ENCODE measurements at regions of chr19 and their contacts with region 1.

Region 1: DNA sequence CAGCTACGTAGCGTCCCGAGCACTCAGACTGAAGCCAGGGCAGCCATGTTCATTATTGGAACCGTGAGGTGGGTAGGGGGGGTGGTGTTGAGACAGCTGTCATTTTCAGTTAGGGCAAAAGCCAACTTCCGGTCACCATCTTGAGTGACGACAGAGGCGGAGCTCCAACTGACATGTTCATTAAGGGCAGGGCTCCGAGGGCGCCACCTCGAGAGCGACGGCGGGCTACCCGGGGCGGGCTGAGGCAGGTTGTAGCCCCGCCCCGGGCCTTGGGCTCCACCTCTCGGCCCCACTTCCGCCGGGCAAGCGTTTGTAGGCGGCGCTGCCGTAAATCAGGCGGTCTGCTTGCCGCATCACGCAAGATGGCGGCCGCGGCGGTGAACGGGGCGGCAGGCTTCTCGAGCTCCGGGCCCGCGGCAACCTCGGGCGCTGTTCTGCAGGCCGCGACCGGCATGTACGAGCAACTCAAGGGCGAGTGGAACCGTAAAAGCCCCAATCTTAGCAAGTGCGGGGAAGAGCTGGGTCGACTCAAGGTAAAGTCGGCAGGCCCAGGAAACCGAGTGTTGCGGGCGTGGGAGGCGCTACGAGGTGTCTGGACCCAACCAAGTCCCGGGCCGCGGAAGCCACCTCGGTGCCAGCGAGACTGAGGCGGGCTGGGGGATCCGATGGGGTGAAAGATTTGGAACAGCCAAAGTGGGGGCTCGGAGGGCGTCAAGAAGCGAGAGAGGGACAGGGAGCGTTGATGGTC is at the start of gene PSMD8:
- DNase-seq: peak; percentile 100
- ATAC-seq: peak; percentile 97
- H3K4me3 ChIP-seq: peak within 1 kb of the TSS; percentile 69 to 92 (median 80)
- H3K4me3 Mint-ChIP-seq: peak within 1 kb of the TSS; percentile 93
- H3K27ac ChIP-seq: peak within 1 kb of the TSS; percentile 88 to 90
- H3K27ac Mint-ChIP-seq: peak within 1 kb of the TSS; percentile 96
- H3K4me1 ChIP-seq: peaks cover 17 to 26% of the 10 kb centered on the region in 2 donors
- H3K4me1 Mint-ChIP-seq: peaks cover 26% of the 10 kb centered on the region
- H3K27me3 ChIP-seq: peaks cover 0 to 12% (median 0%) of the 10 kb centered on the region in 4 experiments
- H3K27me3 Mint-ChIP-seq: peaks cover 6% of the 10 kb centered on the region
- CTCF ChIP-seq: peak; percentile 18
- total RNA-seq, gene PSMD8: 77.1 and 88.1 TPM in 2 replicates

Region 2: DNA sequence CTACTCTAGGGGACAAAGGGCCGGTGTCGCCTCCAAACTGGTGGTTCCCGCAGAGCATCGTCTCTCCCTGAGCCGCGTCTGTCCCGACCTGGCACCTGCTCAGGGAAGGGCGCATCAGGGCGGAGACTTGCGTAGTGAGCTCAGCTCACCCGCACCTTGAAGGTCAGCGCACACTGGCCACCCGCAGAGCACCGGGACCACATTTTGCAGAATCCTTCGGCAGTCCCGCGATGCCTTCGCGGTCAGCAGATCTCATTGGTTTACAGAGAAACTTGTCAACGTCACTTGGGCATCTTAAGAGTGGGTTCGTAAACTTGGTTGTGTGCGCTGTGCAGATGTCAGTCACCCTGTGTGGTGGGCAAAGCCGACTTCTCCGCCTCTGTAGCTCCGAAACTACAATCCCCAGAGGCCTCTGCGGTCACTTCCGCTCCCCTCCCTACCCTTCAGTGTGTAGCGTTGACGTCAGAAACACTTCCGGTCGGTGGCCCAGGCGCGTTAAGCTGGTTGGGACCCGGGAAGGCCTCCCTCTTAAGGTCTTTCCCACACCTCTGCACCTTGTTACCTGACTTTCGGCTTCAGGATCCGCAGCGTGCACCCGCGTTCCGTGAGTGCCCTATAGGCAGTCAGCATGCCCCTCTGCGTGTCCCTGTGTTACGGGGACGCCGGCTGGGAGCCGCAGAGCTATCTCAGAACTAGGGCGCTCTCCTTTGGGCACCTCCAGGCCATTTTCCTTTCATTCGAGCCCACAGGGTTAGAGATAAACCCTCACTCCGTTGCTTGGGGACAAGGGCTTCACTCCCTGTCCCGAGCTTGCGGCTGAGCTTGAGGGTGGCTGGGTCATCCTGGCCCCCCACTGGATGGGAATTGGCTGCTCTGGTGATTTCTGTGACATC is 1040.2 kb before region 1 on chr19:
- CTCF ChIA-PET with region 1: no interaction called
- POLR2A ChIA-PET with region 1: no interaction called
- intact Hi-C with region 1: loop called (anchors 2 kb)
- DNase-seq: peak; percentile 92
- ATAC-seq: peak; percentile 95
- H3K4me3 ChIP-seq: peak overlapping the region; percentile 59 to 86 (median 83)
- H3K4me3 Mint-ChIP-seq: peak overlapping the region; percentile 92
- H3K27ac ChIP-seq: peak overlapping the region; percentile 62 to 85
- H3K27ac Mint-ChIP-seq: peak overlapping the region; percentile 83
- H3K4me1 ChIP-seq: peaks cover 11 to 16% of the 10 kb centered on the region in 2 donors
- H3K4me1 Mint-ChIP-seq: peaks cover 21% of the 10 kb centered on the region
- H3K27me3 ChIP-seq: no peaks in the 10 kb centered on the region
- H3K27me3 Mint-ChIP-seq: no peaks in the 10 kb centered on the region
- CTCF ChIP-seq: no peak

Region 3: DNA sequence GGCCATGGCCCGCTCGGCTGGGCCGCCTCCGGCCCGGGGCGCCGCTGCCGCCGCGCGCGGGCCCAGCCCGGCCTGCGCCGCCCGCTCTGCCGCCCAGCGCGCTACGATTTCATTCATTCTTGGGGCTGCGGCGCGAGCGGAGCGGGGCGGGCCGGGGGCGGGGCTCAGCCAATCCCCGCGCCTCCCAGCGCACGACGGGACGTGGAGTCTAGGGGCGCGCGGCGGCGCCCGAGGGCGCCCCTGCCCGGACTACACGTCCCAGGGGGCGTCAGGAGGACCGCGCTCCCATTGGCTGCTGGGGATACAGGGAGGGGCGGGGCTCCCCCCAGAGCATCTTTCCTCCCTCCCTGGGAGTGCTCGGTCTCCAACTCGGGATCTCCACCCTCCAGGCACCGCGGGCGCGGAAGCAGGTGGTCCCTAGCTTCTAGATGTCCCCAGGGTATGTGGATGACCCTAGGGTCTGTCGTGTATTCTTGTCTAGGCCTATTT is 145.0 kb before region 1 on chr19:
- CTCF ChIA-PET with region 1: interaction called, 11 read pairs
- POLR2A ChIA-PET with region 1: interaction called, 6 read pairs
- intact Hi-C with region 1: no loop called
- DNase-seq: peak; percentile 79
- ATAC-seq: peak; percentile 90
- H3K4me3 ChIP-seq: no peak overlapping the region
- H3K4me3 Mint-ChIP-seq: peak overlapping the region; percentile 64
- H3K27ac ChIP-seq: no peak overlapping the region
- H3K27ac Mint-ChIP-seq: peak overlapping the region; percentile 56
- H3K4me1 ChIP-seq: peaks cover 23% of the 10 kb centered on the region in 2 donors
- H3K4me1 Mint-ChIP-seq: peaks cover 22% of the 10 kb centered on the region
- H3K27me3 ChIP-seq: peaks cover 0 to 83% (median 33%) of the 10 kb centered on the region in 4 experiments
- H3K27me3 Mint-ChIP-seq: peaks cover 37% of the 10 kb centered on the region
- CTCF ChIP-seq: no peak

Region 4: GRCh38 chr19:38263689-38264485 is 110.7 kb before region 1 on chr19:
- CTCF ChIA-PET with region 1: interaction called, 5 read pairs
- POLR2A ChIA-PET with region 1: interaction called, 5 read pairs
- intact Hi-C with region 1: loop called (anchors 1 kb)
- DNase-seq: peak; percentile 95
- ATAC-seq: peak; percentile 91
- H3K4me3 ChIP-seq: peak overlapping the region in 4 of 5 experiments; percentile 67 to 87 (median 71)
- H3K4me3 Mint-ChIP-seq: peak overlapping the region; percentile 98
- H3K27ac ChIP-seq: peak overlapping the region; percentile 83 to 98
- H3K27ac Mint-ChIP-seq: peak overlapping the region; percentile 99
- H3K4me1 ChIP-seq: peaks cover 20 to 26% of the 10 kb centered on the region in 2 donors
- H3K4me1 Mint-ChIP-seq: peaks cover 39% of the 10 kb centered on the region
- H3K27me3 ChIP-seq: no peaks in the 10 kb centered on the region
- H3K27me3 Mint-ChIP-seq: no peaks in the 10 kb centered on the region
- CTCF ChIP-seq: no peak

Region 5: DNA sequence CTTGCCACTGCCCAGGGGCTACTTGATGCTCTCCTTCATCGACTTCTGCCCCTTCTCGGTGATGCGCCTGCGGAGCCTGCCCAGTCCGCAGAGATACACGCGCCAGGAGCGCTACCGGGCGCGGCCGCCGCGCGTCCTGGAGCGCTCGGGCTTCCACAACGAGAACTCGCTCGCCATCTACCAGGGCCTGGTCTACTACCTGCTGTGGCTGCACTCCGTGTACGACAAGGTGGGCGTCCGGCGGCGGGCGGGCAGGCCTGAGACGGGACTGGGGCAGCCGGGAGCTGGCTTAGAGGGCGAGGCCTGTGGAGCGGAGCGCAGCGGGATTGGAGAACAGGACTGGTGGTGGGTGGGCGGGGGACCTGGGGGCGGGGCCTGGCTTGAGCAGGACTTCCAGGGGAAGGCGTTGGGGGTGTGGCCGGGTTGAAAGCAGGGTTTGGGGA is 12.9 kb before region 1 on chr19:
- CTCF ChIA-PET with region 1: interaction called, 5 read pairs
- POLR2A ChIA-PET with region 1: interaction called, 6 read pairs
- intact Hi-C with region 1: loop called (anchors 1 kb)
- DNase-seq: peak; percentile 77
- ATAC-seq: peak; percentile 68
- H3K4me3 ChIP-seq: peak overlapping the region; percentile 14 to 76 (median 62)
- H3K4me3 Mint-ChIP-seq: peak overlapping the region; percentile 91
- H3K27ac ChIP-seq: no peak overlapping the region
- H3K27ac Mint-ChIP-seq: peak overlapping the region; percentile 53
- H3K4me1 ChIP-seq: peaks cover 9 to 20% of the 10 kb centered on the region in 2 donors
- H3K4me1 Mint-ChIP-seq: peaks cover 17% of the 10 kb centered on the region
- H3K27me3 ChIP-seq: peaks cover 0 to 27% (median 2%) of the 10 kb centered on the region in 4 experiments
- H3K27me3 Mint-ChIP-seq: peaks cover 6% of the 10 kb centered on the region
- CTCF ChIP-seq: peak; percentile 16

Region 6: GRCh38 chr19:38483016-38483630 is 108.5 kb after region 1 on chr19:
- CTCF ChIA-PET with region 1: no interaction called
- POLR2A ChIA-PET with region 1: no interaction called
- intact Hi-C with region 1: no loop called
- DNase-seq: no peak
- ATAC-seq: no peak
- H3K4me3 ChIP-seq: no peak overlapping the region
- H3K4me3 Mint-ChIP-seq: no peak overlapping the region
- H3K27ac ChIP-seq: no peak overlapping the region
- H3K27ac Mint-ChIP-seq: no peak overlapping the region
- H3K4me1 ChIP-seq: no peaks in the 10 kb centered on the region
- H3K4me1 Mint-ChIP-seq: no peaks in the 10 kb centered on the region
- H3K27me3 ChIP-seq: peaks cover 0 to 3% (median under 1%) of the 10 kb centered on the region in 4 experiments
- H3K27me3 Mint-ChIP-seq: peaks cover 25% of the 10 kb centered on the region
- CTCF ChIP-seq: no peak

Region 7: GRCh38 chr19:38647368-38647965 is 272.9 kb after region 1 on chr19 and contains the start of gene ACTN4:
- CTCF ChIA-PET with region 1: interaction called, 3 read pairs
- POLR2A ChIA-PET with region 1: no interaction called
- intact Hi-C with region 1: loop called (anchors 1 kb)
- DNase-seq: peak; percentile 100
- ATAC-seq: peak; percentile 94
- H3K4me3 ChIP-seq: peak within 1 kb of the TSS; percentile 82 to 96 (median 91)
- H3K4me3 Mint-ChIP-seq: peak within 1 kb of the TSS; percentile 90
- H3K27ac ChIP-seq: peak within 1 kb of the TSS; percentile 40 to 68
- H3K27ac Mint-ChIP-seq: peak within 1 kb of the TSS; percentile 93
- H3K4me1 ChIP-seq: peaks cover 21 to 31% of the 10 kb centered on the region in 2 donors
- H3K4me1 Mint-ChIP-seq: peaks cover 37% of the 10 kb centered on the region
- H3K27me3 ChIP-seq: no peaks in the 10 kb centered on the region
- H3K27me3 Mint-ChIP-seq: no peaks in the 10 kb centered on the region
- CTCF ChIP-seq: no peak
- total RNA-seq, gene ACTN4: 154 and 164 TPM in 2 replicates

Measured in B cell (primary cell).